ENCODE measurements at regions of chr16 and their contacts with region 1.

Region 1: DNA sequence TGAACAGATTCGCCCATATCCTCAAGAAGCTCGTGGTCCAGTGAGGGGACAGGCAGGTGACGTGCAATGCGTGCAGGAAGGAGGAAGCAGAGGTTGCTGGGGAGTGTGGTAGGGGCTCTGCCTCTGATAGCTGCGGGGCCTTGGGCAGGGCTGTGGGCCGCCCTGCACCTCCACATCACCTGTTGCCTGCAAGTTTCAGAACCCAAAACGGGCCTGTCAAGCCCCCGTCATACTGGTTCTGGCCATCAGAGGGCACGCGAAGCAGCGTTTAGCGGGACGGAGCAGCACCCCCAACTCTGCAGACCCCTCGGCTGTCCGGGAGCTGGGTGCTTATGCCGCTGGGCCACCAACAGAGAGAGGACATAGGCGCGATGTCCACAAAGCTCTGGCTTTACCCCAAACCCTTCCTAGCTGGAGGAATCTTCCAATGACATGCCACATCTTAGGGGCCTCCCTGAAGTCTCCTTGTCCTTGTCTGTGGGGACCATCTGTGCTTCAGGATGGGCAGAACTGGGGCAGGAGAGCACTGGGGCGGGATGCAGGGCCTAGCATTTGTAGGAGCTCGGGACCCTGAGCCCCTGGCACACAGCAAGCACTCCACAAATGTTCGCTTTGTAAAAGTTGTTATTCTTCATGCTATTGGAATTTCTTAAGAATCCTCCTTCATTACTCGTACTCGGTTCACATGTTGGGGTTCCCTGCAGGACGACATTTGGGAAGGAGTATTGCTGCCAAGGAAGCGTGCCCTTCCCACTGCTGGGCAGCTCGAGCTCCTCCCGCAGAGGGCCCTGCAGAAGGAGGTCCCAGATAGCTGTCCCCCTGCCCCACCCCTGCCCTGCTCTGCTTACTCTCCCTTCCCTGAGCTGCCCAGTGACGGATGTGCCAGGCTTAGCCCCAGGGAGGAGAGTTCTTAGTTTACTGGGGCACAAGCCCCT is 64.3 kb downstream of the CNGB1 start:
- DNase-seq: peak in 1 of 2 experiments; percentile 88
- H3K4me3 ChIP-seq: no peak overlapping the region
- H3K27ac ChIP-seq: no peak overlapping the region
- H3K4me1 ChIP-seq: peaks cover 0 to under 1% (median 0%) of the 10 kb centered on the region in 4 experiments; a peak in 1 of 7 replicates
- H3K27me3 ChIP-seq: no peaks in the 10 kb centered on the region
- CTCF ChIP-seq: peak; percentile 77 to 85 (median 80)
- EP300 ChIP-seq: no peak
- POLR2A ChIP-seq: no peak
- RAD21 ChIP-seq: peak; percentile 79 to 85

Region 2: DNA sequence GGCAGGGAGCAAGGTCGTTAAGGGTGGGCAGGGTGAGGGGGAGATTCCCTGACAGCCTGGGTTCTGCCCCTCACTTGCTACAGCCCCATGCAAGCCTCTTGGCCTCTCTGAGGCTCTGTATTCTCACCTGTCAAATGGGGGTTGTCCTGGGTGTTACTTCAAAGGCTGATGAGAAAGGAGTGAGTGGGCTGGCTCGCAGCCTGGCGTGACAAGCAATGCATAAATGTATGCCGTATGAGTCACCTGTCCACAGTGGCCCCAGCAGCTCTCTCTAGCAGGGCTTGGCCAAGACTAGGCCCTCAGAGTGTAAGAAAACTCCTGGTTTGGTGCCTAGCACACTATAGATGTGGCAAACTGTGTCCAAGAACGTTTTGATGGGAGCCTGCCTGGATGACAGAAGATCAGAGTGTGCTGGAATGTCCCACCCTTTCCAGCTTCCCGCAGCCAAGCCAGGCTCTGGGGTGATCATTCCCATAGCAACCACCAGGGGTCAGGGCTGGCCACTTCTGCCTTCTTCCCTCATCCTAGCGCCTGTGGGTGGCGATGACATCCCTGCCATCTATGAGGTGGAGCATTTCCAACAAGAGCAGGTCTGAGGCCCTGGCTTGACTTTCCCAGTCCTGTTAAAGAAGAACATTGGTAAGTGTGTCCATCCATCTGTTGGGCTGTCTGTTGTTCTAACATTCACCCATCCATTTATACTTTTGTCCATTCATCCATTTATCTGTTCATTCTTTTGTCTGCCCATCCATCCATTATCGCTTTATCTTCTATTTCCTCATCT is 315.4 kb before region 1 on chr16:
- CTCF ChIA-PET with region 1: no interaction called
- POLR2A ChIA-PET with region 1: no interaction called
- DNase-seq: peak in 1 of 2 experiments; percentile 88
- H3K4me3 ChIP-seq: no peak overlapping the region
- H3K27ac ChIP-seq: no peak overlapping the region
- H3K4me1 ChIP-seq: no peaks in the 10 kb centered on the region; a peak in 1 of 7 replicates
- H3K27me3 ChIP-seq: peaks cover 0 to 4% (median under 1%) of the 10 kb centered on the region in 4 experiments; a peak in 2 of 7 replicates
- CTCF ChIP-seq: peak; percentile 84 to 99 (median 96)
- EP300 ChIP-seq: no peak
- POLR2A ChIP-seq: no peak
- RAD21 ChIP-seq: peak; percentile 88 to 93

Region 3: GRCh38 chr16:57775661-57776469 is 130.8 kb before region 1 on chr16:
- CTCF ChIA-PET with region 1: interaction called, 21 read pairs
- POLR2A ChIA-PET with region 1: no interaction called
- DNase-seq: peak; percentile 84 to 94
- H3K4me3 ChIP-seq: peak overlapping the region in 1 of 4 experiments; percentile 16; a peak in 3 of 8 replicates
- H3K27ac ChIP-seq: no peak overlapping the region
- H3K4me1 ChIP-seq: peaks cover 6 to 19% (median 17%) of the 10 kb centered on the region in 4 experiments
- H3K27me3 ChIP-seq: peaks cover 0 to 4% (median 1%) of the 10 kb centered on the region in 4 experiments; a peak in 3 of 7 replicates
- CTCF ChIP-seq: peak; percentile 74 to 99 (median 91)
- EP300 ChIP-seq: peak in 1 of 2 experiments; percentile 53; a peak in 1 of 3 replicates
- POLR2A ChIP-seq: no peak
- RAD21 ChIP-seq: peak; percentile 89 to 91

Region 4: GRCh38 chr16:57824880-57825279 is 81.8 kb before region 1 on chr16:
- CTCF ChIA-PET with region 1: no interaction called
- POLR2A ChIA-PET with region 1: no interaction called
- DNase-seq: no peak
- H3K4me3 ChIP-seq: no peak overlapping the region
- H3K27ac ChIP-seq: no peak overlapping the region
- H3K4me1 ChIP-seq: no peaks in the 10 kb centered on the region; a peak in 2 of 7 replicates
- H3K27me3 ChIP-seq: no peaks in the 10 kb centered on the region
- CTCF ChIP-seq: no peak
- EP300 ChIP-seq: no peak
- POLR2A ChIP-seq: no peak
- RAD21 ChIP-seq: no peak

Region 5: GRCh38 chr16:57834936-57835335 is 71.7 kb before region 1 on chr16:
- CTCF ChIA-PET with region 1: no interaction called
- POLR2A ChIA-PET with region 1: no interaction called
- DNase-seq: no peak
- H3K4me3 ChIP-seq: no peak overlapping the region
- H3K27ac ChIP-seq: no peak overlapping the region
- H3K4me1 ChIP-seq: peaks cover 6 to 12% (median 9%) of the 10 kb centered on the region in 4 experiments
- H3K27me3 ChIP-seq: no peaks in the 10 kb centered on the region
- CTCF ChIP-seq: no peak
- EP300 ChIP-seq: no peak
- POLR2A ChIP-seq: no peak
- RAD21 ChIP-seq: no peak

Region 6: DNA sequence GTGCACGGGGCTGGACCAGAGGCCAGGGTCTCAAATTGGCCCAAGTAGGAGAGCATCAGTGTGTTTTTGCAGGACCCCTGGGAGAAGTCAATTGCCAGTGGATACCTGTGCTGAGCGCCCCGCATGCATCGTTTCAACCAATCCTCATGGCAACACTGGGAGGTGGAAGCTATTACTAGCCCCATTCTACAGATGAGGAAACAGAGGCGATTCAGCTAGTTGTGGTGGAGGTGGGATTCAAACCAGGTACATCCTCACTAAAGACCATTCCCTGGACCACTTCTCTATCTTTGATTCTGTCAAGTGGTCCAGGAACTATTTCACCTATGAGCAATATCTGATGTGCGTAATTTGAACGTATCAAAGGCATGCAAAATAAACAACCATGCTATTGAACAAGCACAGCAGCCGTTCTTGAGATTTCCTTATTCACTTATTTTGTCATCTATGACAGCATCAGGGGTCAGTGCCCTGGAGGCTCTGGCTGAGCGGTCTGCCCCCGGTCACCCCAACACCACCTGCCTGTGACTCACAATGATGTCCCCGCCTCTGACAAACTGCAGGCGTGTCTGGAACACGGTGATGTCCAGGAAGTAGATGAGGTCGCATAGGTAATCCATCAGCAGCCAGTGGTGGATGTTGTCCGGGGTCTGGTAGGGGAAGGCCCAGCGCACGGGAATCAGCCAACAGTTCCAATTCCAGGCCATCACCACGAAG is 10.2 kb after region 1 on chr16:
- CTCF ChIA-PET with region 1: interaction called, 25 read pairs
- POLR2A ChIA-PET with region 1: no interaction called
- DNase-seq: no peak
- H3K4me3 ChIP-seq: no peak overlapping the region
- H3K27ac ChIP-seq: no peak overlapping the region
- H3K4me1 ChIP-seq: peaks cover 0 to 10% (median under 1%) of the 10 kb centered on the region in 4 experiments; a peak in 4 of 7 replicates
- H3K27me3 ChIP-seq: no peaks in the 10 kb centered on the region
- CTCF ChIP-seq: no peak
- EP300 ChIP-seq: no peak
- POLR2A ChIP-seq: no peak
- RAD21 ChIP-seq: no peak

Region 7: GRCh38 chr16:57938936-57939871 is 32.6 kb after region 1 on chr16:
- CTCF ChIA-PET with region 1: interaction called, 28 read pairs
- POLR2A ChIA-PET with region 1: no interaction called
- DNase-seq: no peak
- H3K4me3 ChIP-seq: no peak overlapping the region
- H3K27ac ChIP-seq: no peak overlapping the region
- H3K4me1 ChIP-seq: no peaks in the 10 kb centered on the region
- H3K27me3 ChIP-seq: no peaks in the 10 kb centered on the region
- CTCF ChIP-seq: peak; percentile 17 to 54 (median 40); a peak in 3 of 4 replicates
- EP300 ChIP-seq: no peak
- POLR2A ChIP-seq: no peak
- RAD21 ChIP-seq: no peak; a peak in 1 of 4 replicates

Region 8: DNA sequence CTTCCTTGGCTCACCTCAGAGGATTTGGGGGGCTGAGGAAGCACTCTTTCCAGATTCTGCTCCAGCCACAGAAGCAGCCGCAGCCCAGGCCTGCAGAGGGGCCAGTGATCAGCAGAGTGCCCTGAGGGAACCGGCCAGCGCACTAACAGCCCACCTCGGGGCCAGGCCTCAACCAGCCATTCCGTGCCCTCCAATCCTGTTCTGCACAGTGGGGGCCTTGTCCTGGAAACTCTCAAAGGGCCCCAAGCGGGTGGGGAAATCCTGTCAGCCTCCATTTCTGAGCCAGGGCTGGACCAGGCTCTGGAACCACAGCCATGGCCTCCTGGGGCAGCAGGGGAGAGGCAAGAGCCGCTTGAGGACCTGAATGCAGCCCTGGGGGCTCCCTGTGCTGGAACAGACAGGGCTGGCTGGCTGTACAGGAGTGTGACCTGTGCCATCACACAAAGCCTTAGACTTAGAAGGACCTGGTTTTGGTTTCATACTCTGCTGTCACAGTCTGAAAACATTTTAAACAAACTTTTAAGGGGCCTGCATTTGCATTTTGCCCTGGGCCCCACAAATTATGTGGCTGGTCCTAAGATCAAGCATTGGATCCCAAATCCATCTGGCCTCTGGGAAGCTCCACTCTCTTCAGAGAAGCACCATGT is 54.3 kb after region 1 on chr16:
- CTCF ChIA-PET with region 1: interaction called, 40 read pairs
- POLR2A ChIA-PET with region 1: no interaction called
- DNase-seq: no peak
- H3K4me3 ChIP-seq: no peak overlapping the region
- H3K27ac ChIP-seq: no peak overlapping the region
- H3K4me1 ChIP-seq: peaks cover 0 to 10% (median 5%) of the 10 kb centered on the region in 4 experiments; a peak in 6 of 7 replicates
- H3K27me3 ChIP-seq: no peaks in the 10 kb centered on the region
- CTCF ChIP-seq: no peak
- EP300 ChIP-seq: no peak
- POLR2A ChIP-seq: no peak
- RAD21 ChIP-seq: no peak

Region 9: GRCh38 chr16:58011652-58012051 is 105.0 kb after region 1 on chr16:
- CTCF ChIA-PET with region 1: interaction called, 305 read pairs
- POLR2A ChIA-PET with region 1: no interaction called
- DNase-seq: no peak
- H3K4me3 ChIP-seq: no peak overlapping the region
- H3K27ac ChIP-seq: no peak overlapping the region
- H3K4me1 ChIP-seq: peaks cover 0 to 4% (median 1%) of the 10 kb centered on the region in 4 experiments; a peak in 3 of 7 replicates
- H3K27me3 ChIP-seq: no peaks in the 10 kb centered on the region
- CTCF ChIP-seq: no peak
- EP300 ChIP-seq: no peak
- POLR2A ChIP-seq: no peak
- RAD21 ChIP-seq: no peak

Measured in H1 (cell line).